ENCODE measurements at regions of chr9 and their contacts with region 1.

Region 1: DNA sequence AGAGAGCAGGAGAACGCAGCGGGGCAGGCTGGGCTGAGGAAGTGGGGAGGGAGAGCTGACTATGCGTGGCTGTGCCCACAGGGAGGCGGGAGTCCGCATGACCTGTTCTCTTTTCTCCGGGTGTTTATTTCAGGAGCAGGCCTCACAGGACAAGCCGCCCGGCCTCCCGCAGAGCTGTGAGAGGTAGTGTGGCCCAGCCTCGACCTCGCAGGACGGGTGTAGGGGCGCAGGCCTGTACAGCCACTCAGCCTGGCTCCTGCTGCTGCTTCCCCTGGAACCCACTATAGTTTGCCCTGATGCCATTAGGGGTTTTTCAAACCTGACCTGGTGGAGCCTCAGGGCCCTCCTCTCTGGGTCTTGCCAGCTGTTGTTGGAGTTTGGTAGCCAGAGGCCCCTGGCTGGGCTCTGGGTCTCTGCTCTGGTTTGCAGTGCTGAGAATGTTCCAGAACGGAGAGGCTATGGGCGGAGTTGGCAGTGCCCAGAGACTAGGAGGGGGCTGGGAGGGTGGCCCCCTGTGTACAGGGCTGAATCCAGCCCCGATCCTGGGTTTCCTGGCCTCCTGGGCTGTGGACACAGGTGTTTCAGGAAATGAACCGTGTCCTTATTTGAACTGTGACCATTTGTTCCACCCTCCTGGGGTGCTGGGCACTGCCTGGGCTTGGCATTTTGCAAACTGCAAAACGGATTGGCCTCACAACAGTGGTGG is 78.8 kb downstream of the WNK2 start:
- DNase-seq: no peak
- H3K4me3 ChIP-seq: no peak overlapping the region
- H3K27ac ChIP-seq: no peak overlapping the region
- H3K4me1 ChIP-seq: no peaks in the 10 kb centered on the region
- H3K27me3 ChIP-seq: no peaks in the 10 kb centered on the region
- CTCF ChIP-seq: no peak

Region 2: DNA sequence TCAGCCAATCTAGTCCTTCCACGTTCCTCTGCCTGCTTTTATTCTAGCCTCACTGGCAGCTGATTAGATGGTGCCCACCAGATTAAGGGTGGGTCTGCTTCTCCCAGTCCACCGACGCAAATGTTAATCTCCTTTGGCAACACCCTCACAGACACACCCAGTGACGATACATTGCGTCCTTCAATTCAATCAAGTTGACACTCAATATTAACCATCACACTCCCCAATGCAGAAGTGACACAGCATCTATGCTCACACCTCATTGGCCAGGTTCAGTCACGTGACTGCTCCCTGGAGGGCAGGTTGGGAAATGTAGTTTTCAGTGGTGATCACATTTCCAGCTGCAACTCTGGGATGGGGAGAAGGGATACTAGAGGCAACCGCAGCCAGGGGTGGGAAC is 191.2 kb before region 1 on chr9:
- CTCF ChIA-PET with region 1: no interaction called
- dilution Hi-C with region 1: no loop called
- in situ Hi-C with region 1: no loop called
- intact Hi-C with region 1: no loop called
- DNase-seq: no peak
- H3K4me3 ChIP-seq: no peak overlapping the region
- H3K27ac ChIP-seq: no peak overlapping the region
- H3K4me1 ChIP-seq: no peaks in the 10 kb centered on the region
- H3K27me3 ChIP-seq: no peaks in the 10 kb centered on the region
- CTCF ChIP-seq: no peak

Region 3: DNA sequence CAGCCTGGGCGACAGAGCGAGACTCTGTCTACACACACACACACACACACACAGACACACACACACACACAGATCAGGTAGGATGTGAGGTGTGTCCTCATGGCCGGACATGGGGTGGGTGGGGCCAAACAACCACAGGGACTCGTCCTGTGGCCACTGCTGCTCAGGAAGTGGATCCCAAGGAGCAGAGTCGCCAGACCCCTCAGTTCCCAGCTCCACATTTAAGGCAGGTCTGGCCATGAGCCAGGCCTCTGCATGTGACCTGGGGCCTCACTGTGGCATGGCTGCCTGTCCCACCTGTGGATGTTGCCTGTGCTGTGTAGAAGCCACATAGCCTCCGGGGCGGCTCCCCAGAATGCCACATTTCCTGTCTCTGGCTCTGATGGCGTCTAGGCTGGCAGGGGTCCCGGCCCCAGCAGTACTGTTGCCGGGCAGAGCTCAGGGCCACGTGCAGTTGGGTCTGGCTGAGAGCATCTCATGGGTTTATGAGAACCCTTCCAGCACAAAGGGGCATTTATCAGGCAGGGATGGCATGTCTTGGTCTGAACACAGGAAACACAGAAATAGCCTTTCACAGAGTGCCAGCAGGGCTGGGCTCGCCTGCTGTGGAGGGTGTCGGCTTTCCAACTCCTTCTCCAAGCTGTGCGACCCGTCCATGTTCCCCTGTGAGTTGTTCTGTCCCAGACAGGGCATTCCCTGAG is 118.7 kb before region 1 on chr9:
- CTCF ChIA-PET with region 1: no interaction called
- dilution Hi-C with region 1: no loop called
- in situ Hi-C with region 1: no loop called
- intact Hi-C with region 1: no loop called
- DNase-seq: peak; percentile 65
- H3K4me3 ChIP-seq: no peak overlapping the region
- H3K27ac ChIP-seq: no peak overlapping the region
- H3K4me1 ChIP-seq: peaks cover 37% of the 10 kb centered on the region
- H3K27me3 ChIP-seq: no peaks in the 10 kb centered on the region
- CTCF ChIP-seq: no peak

Region 4: GRCh38 chr9:93207326-93207814 is 55.3 kb before region 1 on chr9:
- CTCF ChIA-PET with region 1: no interaction called
- dilution Hi-C with region 1: loop called (anchors 5 kb)
- in situ Hi-C with region 1: no loop called
- intact Hi-C with region 1: no loop called
- DNase-seq: no peak
- H3K4me3 ChIP-seq: no peak overlapping the region
- H3K27ac ChIP-seq: no peak overlapping the region
- H3K4me1 ChIP-seq: no peaks in the 10 kb centered on the region
- H3K27me3 ChIP-seq: no peaks in the 10 kb centered on the region
- CTCF ChIP-seq: no peak